Head of caudate nucleus (tissue), 42 donors: ENCODE measurements at regions of chr5 and their contacts with region 1.

Region 1: DNA sequence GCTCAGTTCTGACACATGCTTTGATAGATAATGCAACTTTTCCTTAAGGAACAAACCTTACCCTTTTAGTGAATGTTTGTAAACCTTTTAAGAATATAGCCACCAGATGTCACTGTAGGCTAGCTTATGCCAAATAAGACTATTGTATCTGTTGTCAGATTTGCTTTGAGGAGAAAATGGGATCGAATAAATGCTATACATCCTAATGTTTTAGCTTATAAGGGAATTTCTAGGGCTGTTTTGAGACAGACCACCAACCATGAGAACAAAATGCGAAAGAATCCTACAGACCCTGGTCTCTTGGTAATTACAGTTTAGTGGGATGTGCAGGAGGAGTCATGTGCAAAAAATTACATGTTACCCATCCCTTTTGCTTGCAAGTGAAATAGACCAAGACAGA is 127.6 kb upstream of the NMUR2 start:
- DNase-seq: peak in 7 of 42 donors; percentile 7 to 63 (median 20)

Region 2: GRCh38 chr5:153147891-153148623 is 615.3 kb after region 1 on chr5:
- intact Hi-C with region 1: loop called (anchors 10 kb)
- DNase-seq: peak in 16 of 42 donors; percentile 1 to 55 (median 15)

Region 3: DNA sequence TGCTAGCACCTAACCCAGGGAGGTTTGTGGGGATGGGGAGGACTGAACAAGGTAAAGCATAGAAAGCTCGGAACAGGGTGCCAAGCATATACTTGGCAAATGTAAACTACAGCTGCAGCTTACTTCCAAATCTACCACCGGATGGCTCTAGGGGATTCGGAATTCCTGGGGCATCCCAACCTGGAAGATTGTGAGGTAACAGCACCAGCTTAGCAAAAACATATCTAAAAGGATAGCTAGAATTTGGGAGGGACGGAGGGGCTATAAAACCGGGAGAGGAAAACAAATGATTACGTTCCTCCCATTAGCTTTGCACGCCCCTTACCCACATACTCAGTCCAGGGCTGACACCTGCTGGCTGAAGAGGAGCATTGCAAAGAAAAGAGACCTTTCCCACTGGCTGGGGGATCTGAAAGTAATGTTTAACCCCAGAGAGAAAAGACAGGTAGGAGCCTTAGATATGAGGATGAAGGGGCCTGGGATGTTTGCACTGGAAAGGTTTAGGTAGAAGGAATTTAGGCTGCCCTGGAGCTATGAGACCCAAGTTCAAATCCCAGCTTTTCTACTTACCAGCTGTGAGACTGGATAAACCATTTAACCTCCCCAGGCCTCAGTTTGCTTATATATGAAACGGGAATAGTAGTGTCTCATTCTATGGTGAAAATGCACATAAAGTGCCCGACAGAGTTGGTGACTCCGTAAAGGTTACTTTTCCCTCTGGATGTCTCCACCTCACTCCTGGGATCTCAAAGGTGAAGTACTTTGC is 1432.3 kb after region 1 on chr5:
- intact Hi-C with region 1: loop called (anchors 5 kb)
- DNase-seq: peak in 40 of 42 donors; percentile 36 to 84 (median 62)